ENCODE measurements at regions of chr1 and their contacts with region 1.

Region 1: GRCh38 chr1:22861764-22862440 is 110.8 kb downstream of the LACTBL1 start:
- DNase-seq: peak in 1 of 2 experiments; percentile 78
- H3K4me3 ChIP-seq: no peak overlapping the region
- H3K27ac ChIP-seq: no peak overlapping the region
- H3K4me1 ChIP-seq: peaks cover 0 to 3% (median 0%) of the 10 kb centered on the region in 4 experiments; a peak in 3 of 7 replicates
- H3K27me3 ChIP-seq: no peaks in the 10 kb centered on the region; a peak in 1 of 7 replicates
- CTCF ChIP-seq: peak; percentile 71 to 80 (median 80)
- EP300 ChIP-seq: no peak
- POLR2A ChIP-seq: no peak
- RAD21 ChIP-seq: peak; percentile 79 to 88

Region 2: GRCh38 chr1:22665752-22666151 is 196.2 kb before region 1 on chr1:
- CTCF ChIA-PET with region 1: interaction called, 30 read pairs
- POLR2A ChIA-PET with region 1: no interaction called
- DNase-seq: peak in 1 of 2 experiments; percentile 79
- H3K4me3 ChIP-seq: no peak overlapping the region
- H3K27ac ChIP-seq: no peak overlapping the region
- H3K4me1 ChIP-seq: peaks cover 0 to 1% (median 0%) of the 10 kb centered on the region in 4 experiments; a peak in 1 of 7 replicates
- H3K27me3 ChIP-seq: no peaks in the 10 kb centered on the region
- CTCF ChIP-seq: peak; percentile 81 to 91 (median 88)
- EP300 ChIP-seq: no peak
- POLR2A ChIP-seq: no peak
- RAD21 ChIP-seq: peak; percentile 94 to 95

Region 3: DNA sequence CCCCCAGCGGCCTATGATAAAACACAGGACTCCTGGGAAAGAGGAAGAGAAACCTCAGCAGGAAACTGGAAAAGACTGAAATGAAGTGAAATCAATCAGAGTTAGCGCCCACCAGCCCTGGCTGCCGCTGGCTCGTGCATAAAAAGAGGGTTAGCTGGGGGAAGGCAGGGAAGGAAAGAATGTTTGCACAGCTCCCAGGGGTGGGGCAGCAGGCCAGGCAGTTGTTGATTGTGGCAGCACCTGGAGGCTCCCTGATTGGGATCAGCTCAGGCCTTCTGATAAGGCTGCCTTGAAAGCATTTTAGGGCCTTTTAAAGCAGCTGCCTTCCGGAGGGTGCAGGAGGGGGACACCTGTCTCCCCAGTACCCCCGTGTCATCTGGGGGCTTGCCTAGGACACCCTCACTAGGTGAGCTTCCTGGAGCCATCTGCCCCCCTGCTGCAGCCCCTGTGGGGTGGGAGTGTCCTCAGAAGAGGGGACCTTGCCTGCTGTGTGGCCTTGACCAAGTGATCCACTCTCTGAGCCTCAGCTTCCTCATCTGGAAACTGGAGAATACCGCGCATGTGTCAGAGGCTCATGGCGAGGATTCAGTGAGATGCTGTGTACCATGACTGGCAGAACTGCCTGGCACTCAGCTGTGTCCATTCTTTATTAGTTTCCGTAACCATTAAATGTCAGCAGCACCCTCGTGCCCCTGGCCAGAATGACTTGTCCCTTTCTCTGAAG is 144.7 kb before region 1 on chr1:
- CTCF ChIA-PET with region 1: interaction called, 16 read pairs
- POLR2A ChIA-PET with region 1: no interaction called
- DNase-seq: no peak
- H3K4me3 ChIP-seq: no peak overlapping the region
- H3K27ac ChIP-seq: no peak overlapping the region
- H3K4me1 ChIP-seq: peaks cover 0 to 11% (median 6%) of the 10 kb centered on the region in 4 experiments; a peak in 6 of 7 replicates
- H3K27me3 ChIP-seq: peaks cover 0 to 8% (median 2%) of the 10 kb centered on the region in 4 experiments; a peak in 5 of 7 replicates
- CTCF ChIP-seq: no peak
- EP300 ChIP-seq: no peak
- POLR2A ChIP-seq: no peak
- RAD21 ChIP-seq: no peak

Region 4: DNA sequence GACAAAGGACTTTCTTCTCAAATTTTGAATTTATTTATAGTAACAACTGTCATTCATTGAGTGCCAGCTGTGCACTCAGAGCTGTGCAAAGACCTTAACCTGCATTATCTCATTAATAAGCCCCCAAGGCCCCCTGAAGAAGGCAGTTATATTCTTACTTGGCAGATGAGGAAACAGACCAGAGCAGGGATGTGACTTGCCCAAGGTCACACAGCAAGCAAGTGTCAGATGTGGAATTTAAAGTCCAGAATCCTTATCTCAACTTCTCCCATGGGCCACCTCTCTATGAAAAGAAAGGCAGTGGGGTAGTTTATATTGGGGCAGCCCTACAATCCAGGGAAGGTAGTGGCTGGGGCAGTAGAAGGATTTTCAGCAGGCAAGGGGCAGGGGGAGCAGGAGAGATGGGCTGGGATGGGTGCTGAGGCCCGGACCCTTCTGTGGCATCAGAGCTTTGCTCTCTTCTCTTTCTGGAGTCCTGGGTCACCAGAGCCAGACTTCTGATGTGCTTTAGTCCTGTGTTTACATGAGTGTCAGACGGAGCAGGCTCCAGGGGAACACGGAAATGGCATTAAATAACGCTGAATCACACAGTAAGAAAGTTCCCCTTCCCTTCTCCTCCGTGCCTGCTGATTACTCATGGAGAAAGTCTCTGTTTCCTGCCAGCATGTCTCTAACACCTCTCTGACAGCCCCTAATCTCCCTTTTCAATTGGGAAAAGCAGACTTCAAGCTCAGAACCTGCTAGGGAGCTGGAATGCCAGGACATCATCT is 111.8 kb before region 1 on chr1:
- CTCF ChIA-PET with region 1: interaction called, 46 read pairs
- POLR2A ChIA-PET with region 1: no interaction called
- DNase-seq: no peak
- H3K4me3 ChIP-seq: no peak overlapping the region
- H3K27ac ChIP-seq: no peak overlapping the region
- H3K4me1 ChIP-seq: peaks cover 0 to 5% (median 1%) of the 10 kb centered on the region in 4 experiments; a peak in 2 of 7 replicates
- H3K27me3 ChIP-seq: no peaks in the 10 kb centered on the region
- CTCF ChIP-seq: no peak
- EP300 ChIP-seq: no peak
- POLR2A ChIP-seq: no peak
- RAD21 ChIP-seq: no peak

Region 5: DNA sequence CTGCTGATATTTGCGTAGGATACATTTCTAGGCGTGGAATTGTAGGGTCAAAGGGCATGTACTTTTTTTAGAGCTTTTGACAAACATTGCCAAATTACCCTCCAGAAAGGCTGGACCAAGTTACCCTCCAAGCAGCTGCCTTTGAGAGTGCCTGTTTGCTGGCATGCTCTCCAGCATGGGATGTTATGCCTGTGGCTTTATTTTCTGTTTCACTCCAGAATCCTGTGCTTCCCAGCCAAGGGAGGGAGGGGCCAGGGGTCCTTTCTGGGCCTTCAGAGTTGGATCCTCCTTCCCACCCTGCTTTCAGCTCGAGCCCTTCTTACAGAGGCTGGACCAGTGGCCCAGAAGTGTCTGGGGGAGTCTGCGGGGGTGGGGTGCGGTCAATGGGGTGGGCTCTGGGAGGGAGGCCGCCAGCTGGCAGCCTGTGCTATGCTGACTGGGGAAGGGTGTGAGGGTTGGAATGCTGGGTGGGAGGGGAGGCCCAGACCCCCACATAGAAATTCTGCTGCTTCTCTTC is 70.0 kb before region 1 on chr1:
- CTCF ChIA-PET with region 1: interaction called, 21 read pairs
- POLR2A ChIA-PET with region 1: no interaction called
- DNase-seq: no peak
- H3K4me3 ChIP-seq: no peak overlapping the region
- H3K27ac ChIP-seq: no peak overlapping the region
- H3K4me1 ChIP-seq: peaks cover 0 to 28% (median 10%) of the 10 kb centered on the region in 4 experiments; a peak in 6 of 7 replicates
- H3K27me3 ChIP-seq: no peaks in the 10 kb centered on the region
- CTCF ChIP-seq: no peak
- EP300 ChIP-seq: no peak
- POLR2A ChIP-seq: no peak
- RAD21 ChIP-seq: no peak

Region 6: GRCh38 chr1:22826604-22827580 is 35.0 kb before region 1 on chr1:
- CTCF ChIA-PET with region 1: interaction called, 16 read pairs
- POLR2A ChIA-PET with region 1: no interaction called
- DNase-seq: peak in 1 of 2 experiments; percentile 25
- H3K4me3 ChIP-seq: peak overlapping the region in 1 of 4 experiments; percentile 1; a peak in 3 of 8 replicates
- H3K27ac ChIP-seq: no peak overlapping the region
- H3K4me1 ChIP-seq: peaks cover 14 to 23% (median 15%) of the 10 kb centered on the region in 4 experiments
- H3K27me3 ChIP-seq: no peaks in the 10 kb centered on the region
- CTCF ChIP-seq: no peak
- EP300 ChIP-seq: no peak
- POLR2A ChIP-seq: no peak
- RAD21 ChIP-seq: no peak

Region 7: DNA sequence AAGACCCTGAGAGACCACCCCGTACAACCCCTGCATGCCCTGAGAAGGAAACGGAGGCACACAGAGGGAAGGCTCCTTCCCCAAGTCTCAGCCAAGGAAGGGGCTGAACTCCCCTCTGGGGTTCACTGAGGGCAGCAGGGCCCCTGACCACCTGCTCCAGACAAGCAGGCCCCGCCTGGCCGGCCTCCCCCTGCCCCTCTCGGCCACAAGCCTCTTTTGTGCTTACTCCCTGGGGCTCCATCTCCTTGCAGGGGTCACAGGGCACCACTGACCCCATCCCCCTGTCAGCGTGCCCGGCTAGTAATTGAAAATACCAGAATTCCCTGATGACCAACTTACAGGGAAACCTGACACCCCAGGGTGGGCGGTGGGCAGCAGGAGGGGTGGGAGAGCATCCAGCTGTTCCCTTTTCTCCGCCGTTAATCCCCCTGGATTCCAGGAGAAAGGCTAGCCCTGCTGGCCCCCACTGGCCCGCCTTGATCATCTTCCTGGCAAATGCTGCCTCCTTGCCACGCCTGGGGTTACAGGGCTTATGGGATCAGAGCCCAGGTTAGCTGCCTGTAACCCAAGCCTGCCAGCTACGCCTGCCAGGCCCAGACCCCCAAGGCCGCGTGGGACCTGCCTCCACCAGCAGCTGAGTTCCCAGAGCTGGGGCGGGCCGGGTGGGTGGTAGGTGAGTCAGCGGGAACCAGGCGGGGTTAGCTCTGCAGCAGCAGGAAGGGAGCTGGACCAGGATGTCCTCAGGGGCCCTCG is 14.6 kb after region 1 on chr1:
- CTCF ChIA-PET with region 1: interaction called, 52 read pairs
- POLR2A ChIA-PET with region 1: no interaction called
- DNase-seq: no peak
- H3K4me3 ChIP-seq: no peak overlapping the region
- H3K27ac ChIP-seq: 0 out of 2 replicates have a peak overlapping the region, but pooled peaks have one; percentile 15
- H3K4me1 ChIP-seq: peaks cover 0 to 17% (median 8%) of the 10 kb centered on the region in 4 experiments; a peak in 6 of 7 replicates
- H3K27me3 ChIP-seq: no peaks in the 10 kb centered on the region
- CTCF ChIP-seq: no peak
- EP300 ChIP-seq: no peak
- POLR2A ChIP-seq: no peak
- RAD21 ChIP-seq: no peak